ENCODE measurements at regions of chr3 and their contacts with region 1.

Region 1: DNA sequence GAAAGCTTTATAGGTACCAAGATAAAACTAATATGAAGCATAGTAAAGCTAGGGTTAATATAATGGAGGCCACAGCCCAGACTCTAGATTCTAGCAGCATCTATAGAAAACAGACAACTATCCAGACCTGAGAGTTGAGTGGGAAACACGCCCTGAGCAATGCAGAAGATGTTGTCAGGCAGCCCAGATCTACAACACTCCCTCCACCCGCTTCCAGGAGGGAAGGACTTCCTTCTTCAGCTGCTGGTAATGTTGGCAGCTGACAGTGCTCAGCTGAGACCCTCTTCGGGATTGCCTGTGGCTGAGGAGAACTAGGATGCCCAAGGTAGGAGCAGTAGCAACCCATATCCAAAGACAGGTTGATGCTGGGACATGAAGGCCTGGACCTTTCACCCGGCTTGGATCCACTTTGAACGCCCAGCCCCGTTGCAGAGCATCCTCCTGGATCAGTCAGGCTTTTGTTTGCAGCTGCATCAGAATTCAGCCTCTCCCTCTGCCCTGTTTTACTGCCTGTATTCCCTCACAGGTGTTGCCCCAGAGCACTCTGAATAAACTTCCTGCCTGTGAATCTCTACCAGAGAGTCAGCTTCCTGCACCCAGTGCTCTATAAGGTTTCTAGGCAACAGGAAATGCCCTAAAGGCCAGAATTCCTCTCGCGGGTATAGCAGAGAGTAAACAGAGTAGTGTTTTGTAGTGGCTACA is 174.7 kb upstream of the IL12A start:
- DNase-seq: no peak
- ATAC-seq: no peak
- H3K4me3 ChIP-seq: no peak overlapping the region
- H3K27ac ChIP-seq: no peak overlapping the region
- H3K4me1 ChIP-seq: peaks cover 0 to 32% (median 18%) of the 10 kb centered on the region in 12 donors
- H3K27me3 ChIP-seq: no peaks in the 10 kb centered on the region
- CTCF ChIP-seq: no peak
- POLR2A ChIP-seq: no peak

Region 2: GRCh38 chr3:159266779-159267178 is 547.2 kb before region 1 on chr3:
- intact Hi-C with region 1: loop called in 4 of 10 experiments (anchors 5 kb)
- DNase-seq: no peak
- ATAC-seq: peak in 1 of 4 donors; percentile 34
- H3K4me3 ChIP-seq: no peak overlapping the region
- H3K27ac ChIP-seq: no peak overlapping the region
- H3K4me1 ChIP-seq: no peaks in the 10 kb centered on the region
- H3K27me3 ChIP-seq: no peaks in the 10 kb centered on the region
- CTCF ChIP-seq: peak in 8 of 12 donors; percentile 9 to 38 (median 32)
- POLR2A ChIP-seq: no peak